Head of caudate nucleus (tissue), 42 donors: ENCODE measurements at regions of chr22 and their contacts with region 1.

Region 1: DNA sequence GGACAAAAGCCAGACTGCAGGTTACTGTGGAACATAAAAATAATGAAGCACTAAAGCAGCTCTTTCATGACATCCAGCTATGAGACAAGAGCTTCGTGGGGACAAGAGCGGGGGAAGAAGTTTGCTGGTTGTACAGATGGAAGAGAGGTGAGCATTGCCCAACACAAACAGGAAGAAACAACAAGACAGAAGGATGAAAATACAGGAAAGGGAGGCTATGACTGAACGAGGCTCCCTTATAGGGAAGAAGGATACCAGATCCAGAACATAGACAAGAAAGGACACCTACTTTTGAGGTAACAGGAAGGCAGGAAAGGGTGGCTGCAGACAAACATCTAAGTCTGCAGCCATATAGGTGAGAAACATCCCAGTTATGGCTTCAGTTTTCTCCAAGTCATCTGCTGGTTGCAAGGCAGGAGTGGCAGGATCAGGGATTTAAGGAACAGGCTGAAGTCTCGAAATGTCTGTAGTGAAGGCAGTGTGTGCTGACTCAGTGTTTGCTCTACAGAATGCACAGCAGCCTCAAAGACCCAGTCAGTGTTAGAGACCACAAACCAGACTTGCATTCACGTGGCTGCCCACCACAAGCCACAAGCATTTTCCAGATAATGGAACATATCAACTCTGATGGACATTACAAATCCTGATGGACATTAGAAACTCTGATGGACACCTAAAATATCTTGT is 1.9 kb downstream of the CLTCL1 start:
- DNase-seq: peak in 1 of 42 donors; percentile 18

Region 2: GRCh38 chr22:19178656-19179496 is 110.7 kb before region 1 on chr22 and contains the start of gene SLC25A1:
- intact Hi-C with region 1: loop called (anchors 2 kb)
- DNase-seq: peak; percentile 80 to 97 (median 94)

Region 3: DNA sequence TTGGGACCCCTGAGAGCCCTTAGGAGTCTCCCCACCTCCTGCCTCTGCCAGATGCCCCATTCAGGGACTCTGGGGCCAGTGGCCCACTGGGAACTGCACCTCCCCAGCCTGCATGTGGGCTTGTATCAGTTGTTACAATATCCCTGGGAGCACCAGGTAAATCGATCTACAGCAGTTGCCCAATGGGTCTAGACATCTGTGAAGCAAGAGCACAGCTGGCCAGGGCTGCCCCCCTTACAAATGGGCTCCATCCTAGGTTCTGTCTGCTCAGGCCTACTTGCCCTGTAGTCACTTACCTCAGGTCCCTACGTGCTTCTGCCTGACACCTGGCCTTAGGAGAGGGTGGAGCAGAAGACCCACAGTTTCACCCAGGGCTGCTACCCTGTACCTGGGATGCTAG is 79.3 kb after region 1 on chr22:
- intact Hi-C with region 1: no loop called
- DNase-seq: no peak

Region 4: GRCh38 chr22:19832476-19833108 is 543.0 kb after region 1 on chr22:
- intact Hi-C with region 1: no loop called
- DNase-seq: peak in 25 of 42 donors; percentile 3 to 41 (median 18)